Heart left ventricle (tissue), 16 donors: ENCODE measurements at regions of chr19 and their contacts with region 1.

Region 1: GRCh38 chr19:51807111-51807701 is 12.2 kb downstream of the FPR3 start:
- DNase-seq: peak in 2 of 5 donors; percentile 19 to 37
- ATAC-seq: no peak
- H3K4me3 ChIP-seq: no peak overlapping the region
- H3K27ac ChIP-seq: peak overlapping the region in 2 of 12 donors; percentile 39 to 42
- H3K4me1 ChIP-seq: peaks cover 0 to 94% (median 11%) of the 10 kb centered on the region in 12 donors
- H3K27me3 ChIP-seq: no peaks in the 10 kb centered on the region
- CTCF ChIP-seq: no peak
- POLR2A ChIP-seq: no peak

Region 2: DNA sequence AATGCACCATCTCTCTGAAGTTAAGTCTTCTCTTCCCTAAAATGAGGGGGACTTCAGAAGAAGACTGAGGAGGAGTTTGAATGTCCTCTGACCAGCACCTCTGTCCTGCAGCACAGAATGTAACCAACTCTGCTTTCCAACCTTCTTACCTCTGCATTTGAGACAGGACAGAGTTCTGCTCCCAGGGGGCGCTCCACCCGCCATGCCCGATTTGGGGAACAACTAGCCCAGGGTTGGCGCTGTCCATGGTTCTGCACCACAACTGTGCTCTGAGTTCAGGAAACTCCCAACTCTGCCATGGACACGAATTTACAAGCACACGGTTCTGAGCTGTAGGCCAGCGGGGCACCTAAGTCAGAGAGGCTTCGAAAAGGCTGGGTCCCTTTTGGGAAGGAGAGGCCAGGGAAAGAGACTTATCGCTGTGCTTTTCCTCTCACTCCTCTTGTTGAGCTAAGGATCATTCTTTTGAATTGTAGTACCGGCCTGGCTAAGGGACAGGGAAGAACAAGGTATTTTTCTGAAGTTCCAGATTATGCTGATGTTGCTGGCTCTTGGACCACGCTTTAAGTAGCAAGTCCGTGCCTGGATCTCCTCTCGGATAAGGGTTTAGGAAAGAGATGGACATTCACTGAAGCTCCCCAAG is 199.2 kb before region 1 on chr19:
- intact Hi-C with region 1: loop called in 1 of 10 experiments (anchors 5 kb)
- DNase-seq: peak; percentile 69 to 89 (median 80)
- ATAC-seq: peak in 3 of 4 donors; percentile 65 to 83 (median 74)
- H3K4me3 ChIP-seq: no peak overlapping the region
- H3K27ac ChIP-seq: no peak overlapping the region
- H3K4me1 ChIP-seq: no peaks in the 10 kb centered on the region
- H3K27me3 ChIP-seq: peaks cover 0 to 16% (median 1%) of the 10 kb centered on the region in 9 donors
- CTCF ChIP-seq: peak; percentile 28 to 62 (median 48)
- POLR2A ChIP-seq: no peak

Region 3: GRCh38 chr19:51712460-51713083 is 94.6 kb before region 1 on chr19:
- intact Hi-C with region 1: loop called in 1 of 10 experiments (anchors 10 kb)
- DNase-seq: no peak
- ATAC-seq: no peak
- H3K4me3 ChIP-seq: no peak overlapping the region
- H3K27ac ChIP-seq: no peak overlapping the region
- H3K4me1 ChIP-seq: no peaks in the 10 kb centered on the region
- H3K27me3 ChIP-seq: peaks cover 0 to 25% (median 0%) of the 10 kb centered on the region in 9 donors
- CTCF ChIP-seq: peak in 8 of 12 donors; percentile 9 to 42 (median 28)
- POLR2A ChIP-seq: no peak